ENCODE measurements at regions of chr14 and their contacts with region 1.

Region 1: GRCh38 chr14:77457522-77458290 is at the starts of genes AHSA1 and VIPAS39:
- DNase-seq: peak; percentile 99
- ATAC-seq: peak; percentile 93
- H3K4me3 ChIP-seq: peak within 1 kb of the TSS; percentile 87 to 89
- H3K27ac ChIP-seq: peak within 1 kb of the TSS; percentile 81
- H3K4me1 ChIP-seq: peaks cover 6 to 15% of the 10 kb centered on the region in 2 experiments
- H3K27me3 ChIP-seq: no peaks in the 10 kb centered on the region
- CTCF ChIP-seq: 0 out of 6 replicates have a peak, but pooled peaks of 1 of the 3 experiments have one; percentile 2
- POLR2A ChIP-seq: peak; percentile 79
- RAD21 ChIP-seq: no peak
- total RNA-seq, gene AHSA1: 222 TPM
- total RNA-seq, gene VIPAS39: 16.8 TPM

Region 2: GRCh38 chr14:77301103-77301502 is 156.6 kb before region 1 on chr14:
- CTCF ChIA-PET with region 1: no interaction called
- POLR2A ChIA-PET with region 1: no interaction called
- RAD21 ChIA-PET with region 1: no interaction called
- intact Hi-C with region 1: loop called (anchors 5 kb)
- DNase-seq: peak; percentile 68
- ATAC-seq: peak; percentile 69
- H3K4me3 ChIP-seq: no peak overlapping the region
- H3K27ac ChIP-seq: no peak overlapping the region
- H3K4me1 ChIP-seq: peaks cover 19 to 22% of the 10 kb centered on the region in 2 experiments
- H3K27me3 ChIP-seq: no peaks in the 10 kb centered on the region
- CTCF ChIP-seq: peak; percentile 87 to 92 (median 89)
- POLR2A ChIP-seq: no peak
- RAD21 ChIP-seq: peak; percentile 82

Region 3: GRCh38 chr14:77376771-77377501 is 80.8 kb before region 1 on chr14 and contains the starts of genes SAMD15 and TMED8:
- CTCF ChIA-PET with region 1: no interaction called
- POLR2A ChIA-PET with region 1: no interaction called
- RAD21 ChIA-PET with region 1: no interaction called
- intact Hi-C with region 1: loop called (anchors 5 kb)
- DNase-seq: peak; percentile 61
- ATAC-seq: peak; percentile 99
- H3K4me3 ChIP-seq: peak within 1 kb of the TSS; percentile 64 to 69
- H3K27ac ChIP-seq: peak within 1 kb of the TSS; percentile 95
- H3K4me1 ChIP-seq: peaks cover 12 to 16% of the 10 kb centered on the region in 2 experiments; a peak in 3 of 4 replicates
- H3K27me3 ChIP-seq: no peaks in the 10 kb centered on the region; the same call in 1 of the 2 replicates
- CTCF ChIP-seq: no peak
- POLR2A ChIP-seq: peak; percentile 40
- RAD21 ChIP-seq: no peak
- total RNA-seq, gene SAMD15: 1.9 TPM
- total RNA-seq, gene TMED8: 21.2 TPM

Region 4: GRCh38 chr14:77616454-77617229 is 158.9 kb after region 1 on chr14 and contains the start of gene SPTLC2:
- CTCF ChIA-PET with region 1: no interaction called
- POLR2A ChIA-PET with region 1: no interaction called
- RAD21 ChIA-PET with region 1: interaction called in 1 of 2 experiments, 3 read pairs
- intact Hi-C with region 1: loop called (anchors 1 kb)
- DNase-seq: peak; percentile 99
- ATAC-seq: peak; percentile 97
- H3K4me3 ChIP-seq: peak within 1 kb of the TSS; percentile 73 to 89
- H3K27ac ChIP-seq: peak within 1 kb of the TSS; percentile 79
- H3K4me1 ChIP-seq: peaks cover 8 to 39% of the 10 kb centered on the region in 2 experiments
- H3K27me3 ChIP-seq: no peaks in the 10 kb centered on the region
- CTCF ChIP-seq: peak in 1 of 3 experiments; percentile 11; a peak in 1 of 6 replicates
- POLR2A ChIP-seq: peak; percentile 72
- RAD21 ChIP-seq: no peak
- total RNA-seq, gene SPTLC2: 44.7 TPM

Region 5: GRCh38 chr14:77630111-77630510 is 172.4 kb after region 1 on chr14:
- CTCF ChIA-PET with region 1: no interaction called
- POLR2A ChIA-PET with region 1: no interaction called
- RAD21 ChIA-PET with region 1: no interaction called
- intact Hi-C with region 1: no loop called
- DNase-seq: no peak
- ATAC-seq: no peak
- H3K4me3 ChIP-seq: no peak overlapping the region
- H3K27ac ChIP-seq: no peak overlapping the region
- H3K4me1 ChIP-seq: no peaks in the 10 kb centered on the region
- H3K27me3 ChIP-seq: no peaks in the 10 kb centered on the region
- CTCF ChIP-seq: no peak
- POLR2A ChIP-seq: no peak
- RAD21 ChIP-seq: no peak

Region 6: DNA sequence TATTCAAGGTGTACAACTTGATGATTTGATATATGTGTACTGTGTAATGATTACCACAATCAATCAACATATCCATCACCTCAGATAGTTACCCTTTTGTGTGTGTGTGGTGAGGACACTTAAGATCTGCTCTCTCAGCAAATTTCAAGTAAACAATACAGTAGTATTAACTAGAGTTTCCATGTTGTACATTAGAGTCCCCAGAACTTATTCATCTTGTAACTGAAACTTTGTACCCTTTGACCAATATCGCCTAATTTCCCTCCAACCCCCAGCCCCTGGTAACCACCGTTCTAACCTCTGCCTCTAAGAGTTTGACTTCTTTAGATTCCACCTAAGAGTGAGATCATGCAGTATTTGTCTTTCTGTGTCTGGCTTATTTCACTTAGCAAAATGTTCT is 354.3 kb after region 1 on chr14:
- CTCF ChIA-PET with region 1: no interaction called
- POLR2A ChIA-PET with region 1: no interaction called
- RAD21 ChIA-PET with region 1: interaction called in 1 of 2 experiments, 4 read pairs
- intact Hi-C with region 1: loop called (anchors 10 kb)
- DNase-seq: no peak
- ATAC-seq: no peak
- H3K4me3 ChIP-seq: no peak overlapping the region
- H3K27ac ChIP-seq: no peak overlapping the region
- H3K4me1 ChIP-seq: peaks cover 4 to 5% of the 10 kb centered on the region in 2 experiments; a peak in 3 of 4 replicates
- H3K27me3 ChIP-seq: no peaks in the 10 kb centered on the region
- CTCF ChIP-seq: no peak
- POLR2A ChIP-seq: no peak
- RAD21 ChIP-seq: no peak